ENCODE measurements at regions of chr13 and their contacts with region 1.

Region 1: GRCh38 chr13:19860885-19861655 is 2.4 kb downstream of the ZMYM5 start:
- DNase-seq: no peak
- ATAC-seq: no peak
- H3K4me3 ChIP-seq: peak overlapping the region; percentile 73 to 80
- H3K27ac ChIP-seq: peak overlapping the region; percentile 32
- H3K4me1 ChIP-seq: peaks cover 12% of the 10 kb centered on the region
- H3K27me3 ChIP-seq: no peaks in the 10 kb centered on the region
- CTCF ChIP-seq: no peak

Region 2: DNA sequence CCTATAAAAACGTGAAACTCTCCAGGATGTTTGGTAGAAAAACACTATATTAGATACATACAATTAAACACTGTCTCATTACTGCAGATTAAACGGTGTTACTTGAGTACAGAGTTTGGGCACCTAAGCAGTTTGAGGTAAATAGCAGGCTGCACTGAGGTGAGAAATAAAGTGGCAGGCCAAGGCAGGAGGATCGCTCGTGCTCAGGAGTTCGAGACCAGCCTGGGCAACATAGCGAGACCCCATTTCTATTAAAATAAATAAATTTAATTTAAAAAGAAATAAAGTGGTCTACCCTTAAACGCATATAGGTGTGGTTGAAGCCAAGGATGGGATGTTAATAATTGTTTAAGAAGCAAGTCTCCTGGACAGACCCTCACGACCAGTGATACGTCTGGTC is 79.5 kb before region 1 on chr13:
- CTCF ChIA-PET with region 1: no interaction called
- POLR2A ChIA-PET with region 1: interaction called, 14 read pairs
- in situ Hi-C with region 1: no loop called
- intact Hi-C with region 1: no loop called
- DNase-seq: no peak
- ATAC-seq: no peak
- H3K4me3 ChIP-seq: peak overlapping the region; percentile 87
- H3K27ac ChIP-seq: peak overlapping the region; percentile 85
- H3K4me1 ChIP-seq: no peaks in the 10 kb centered on the region
- H3K27me3 ChIP-seq: no peaks in the 10 kb centered on the region
- CTCF ChIP-seq: no peak